B cell (primary cell): ENCODE measurements at regions of chr19 and their contacts with region 1.

Region 1: GRCh38 chr19:49468746-49469447 is 5.1 kb upstream of the FLT3LG start:
- DNase-seq: peak; percentile 98
- ATAC-seq: peak; percentile 75
- H3K4me3 ChIP-seq: peak overlapping the region in 1 of 5 experiments; percentile 18
- H3K4me3 Mint-ChIP-seq: peak overlapping the region; percentile 74
- H3K27ac ChIP-seq: peak overlapping the region; percentile 96 to 98
- H3K27ac Mint-ChIP-seq: peak overlapping the region; percentile 98
- H3K4me1 ChIP-seq: peaks cover 44 to 57% of the 10 kb centered on the region in 2 donors
- H3K4me1 Mint-ChIP-seq: peaks cover 41% of the 10 kb centered on the region
- H3K27me3 ChIP-seq: no peaks in the 10 kb centered on the region
- H3K27me3 Mint-ChIP-seq: no peaks in the 10 kb centered on the region
- CTCF ChIP-seq: no peak

Region 2: GRCh38 chr19:49443366-49444099 is 25.4 kb before region 1 on chr19:
- CTCF ChIA-PET with region 1: interaction called, 70 read pairs
- POLR2A ChIA-PET with region 1: interaction called, 5 read pairs
- intact Hi-C with region 1: loop called (anchors 1 kb)
- DNase-seq: peak; percentile 98
- ATAC-seq: peak; percentile 85
- H3K4me3 ChIP-seq: peak overlapping the region; percentile 12 to 80 (median 71)
- H3K4me3 Mint-ChIP-seq: peak overlapping the region; percentile 93
- H3K27ac ChIP-seq: peak overlapping the region; percentile 65 to 72
- H3K27ac Mint-ChIP-seq: peak overlapping the region; percentile 95
- H3K4me1 ChIP-seq: peaks cover 18 to 31% of the 10 kb centered on the region in 2 donors
- H3K4me1 Mint-ChIP-seq: peaks cover 35% of the 10 kb centered on the region
- H3K27me3 ChIP-seq: peaks cover 2 to 39% (median 34%) of the 10 kb centered on the region in 4 experiments
- H3K27me3 Mint-ChIP-seq: peaks cover 37% of the 10 kb centered on the region
- CTCF ChIP-seq: peak; percentile 89

Region 3: DNA sequence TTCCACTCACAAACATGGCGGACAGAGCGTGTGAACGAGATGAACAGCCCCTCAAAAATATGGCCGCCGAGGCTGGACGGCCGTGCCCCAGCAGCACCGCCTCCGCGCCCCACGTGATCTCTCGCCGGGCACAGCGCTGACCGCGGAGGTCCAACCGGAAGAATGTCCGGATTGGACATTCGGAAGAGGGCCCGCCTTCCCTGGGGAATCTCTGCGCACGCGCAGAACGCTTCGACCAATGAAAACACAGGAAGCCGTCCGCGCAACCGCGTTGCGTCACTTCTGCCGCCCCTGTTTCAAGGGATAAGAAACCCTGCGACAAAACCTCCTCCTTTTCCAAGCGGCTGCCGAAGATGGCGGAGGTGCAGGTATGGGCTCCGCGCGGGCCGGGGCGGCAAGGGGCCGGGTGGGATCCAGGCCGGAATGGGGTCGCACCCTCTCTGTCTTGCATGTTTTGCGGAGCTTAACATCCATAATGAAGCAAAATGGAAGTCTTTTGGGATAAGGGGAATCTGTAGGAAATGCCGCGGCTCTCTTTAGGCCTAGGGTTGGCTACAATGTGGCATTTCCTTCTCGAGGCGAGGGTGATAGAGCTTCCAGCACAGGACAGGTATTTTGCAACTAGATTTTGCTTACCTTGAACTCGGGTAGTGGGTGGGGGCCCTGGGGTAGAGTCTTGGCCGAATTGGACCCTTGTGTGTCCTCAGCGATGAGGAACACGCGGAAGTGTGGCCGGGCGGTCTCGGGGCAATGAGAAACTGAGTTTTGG is 18.6 kb after region 1 on chr19 and contains the start of gene RPL13A:
- CTCF ChIA-PET with region 1: interaction called, 3 read pairs
- POLR2A ChIA-PET with region 1: interaction called, 10 read pairs
- intact Hi-C with region 1: loop called (anchors 1 kb)
- DNase-seq: peak; percentile 100
- ATAC-seq: peak; percentile 93
- H3K4me3 ChIP-seq: peak within 1 kb of the TSS; percentile 92 to 100 (median 97)
- H3K4me3 Mint-ChIP-seq: peak within 1 kb of the TSS; percentile 99
- H3K27ac ChIP-seq: peak within 1 kb of the TSS; percentile 91 to 97
- H3K27ac Mint-ChIP-seq: peak within 1 kb of the TSS; percentile 97
- H3K4me1 ChIP-seq: peaks cover 17 to 36% of the 10 kb centered on the region in 2 donors
- H3K4me1 Mint-ChIP-seq: peaks cover 42% of the 10 kb centered on the region
- H3K27me3 ChIP-seq: no peaks in the 10 kb centered on the region
- H3K27me3 Mint-ChIP-seq: no peaks in the 10 kb centered on the region
- CTCF ChIP-seq: no peak
- total RNA-seq, gene RPL13A: 5,221 and 5,457 TPM in 2 replicates

Region 4: GRCh38 chr19:49539192-49539952 is 70.5 kb after region 1 on chr19:
- CTCF ChIA-PET with region 1: no interaction called
- POLR2A ChIA-PET with region 1: interaction called, 10 read pairs
- intact Hi-C with region 1: no loop called
- DNase-seq: no peak
- ATAC-seq: no peak
- H3K4me3 ChIP-seq: no peak overlapping the region
- H3K4me3 Mint-ChIP-seq: no peak overlapping the region
- H3K27ac ChIP-seq: no peak overlapping the region
- H3K27ac Mint-ChIP-seq: peak overlapping the region; percentile 26
- H3K4me1 ChIP-seq: peaks cover 24 to 35% of the 10 kb centered on the region in 2 donors
- H3K4me1 Mint-ChIP-seq: peaks cover 35% of the 10 kb centered on the region
- H3K27me3 ChIP-seq: no peaks in the 10 kb centered on the region
- H3K27me3 Mint-ChIP-seq: no peaks in the 10 kb centered on the region
- CTCF ChIP-seq: no peak